Calu3 (cell line): ENCODE measurements at regions of chr3 and their contacts with region 1.

Region 1: DNA sequence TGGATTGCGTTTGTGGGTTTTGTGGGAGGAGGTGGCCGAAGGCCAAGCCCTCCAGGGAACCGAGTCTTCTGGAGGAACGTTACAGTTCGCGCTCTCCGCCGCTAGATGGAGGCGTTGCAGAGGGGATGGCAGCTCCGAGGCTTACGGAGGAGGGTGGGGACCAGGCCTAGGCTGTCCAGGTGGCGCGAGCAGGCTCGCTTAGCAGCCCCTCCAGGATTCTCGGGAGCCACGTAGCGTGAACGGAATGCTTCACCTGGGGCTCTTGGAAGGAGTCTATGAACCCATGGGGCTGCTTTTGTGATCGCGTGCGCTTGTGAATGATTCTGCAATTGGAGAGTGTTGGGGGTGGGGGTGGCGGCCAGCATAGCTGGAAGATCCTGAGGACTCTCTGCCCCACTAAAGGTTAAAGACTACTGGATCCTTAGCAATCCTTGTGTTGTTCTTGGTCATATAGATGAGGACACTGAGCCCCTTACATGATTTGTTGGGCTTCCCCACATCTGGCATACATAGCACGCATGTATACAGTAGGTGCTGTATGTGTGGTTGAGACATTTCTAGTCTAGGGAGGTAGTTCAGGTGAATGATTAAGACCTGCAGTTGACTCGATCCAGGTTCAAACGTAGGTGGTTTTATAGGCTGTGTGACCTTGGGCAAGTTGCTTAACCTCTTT is 25.7 kb downstream of the FAM3D start:
- DNase-seq: peak; percentile 84
- H3K4me3 Mint-ChIP-seq: no peak overlapping the region
- H3K27ac Mint-ChIP-seq: no peak overlapping the region
- H3K4me1 Mint-ChIP-seq: peaks cover 7% of the 10 kb centered on the region
- H3K27me3 Mint-ChIP-seq: peaks cover 7% of the 10 kb centered on the region
- CTCF ChIP-seq: peak; percentile 76

Region 2: GRCh38 chr3:58824285-58824684 is 183.4 kb after region 1 on chr3:
- CTCF ChIA-PET with region 1: no interaction called
- intact Hi-C with region 1: loop called (anchors 5 kb)
- DNase-seq: peak; percentile 70
- H3K4me3 Mint-ChIP-seq: no peak overlapping the region
- H3K27ac Mint-ChIP-seq: no peak overlapping the region
- H3K4me1 Mint-ChIP-seq: peaks cover 11% of the 10 kb centered on the region
- H3K27me3 Mint-ChIP-seq: no peaks in the 10 kb centered on the region
- CTCF ChIP-seq: peak; percentile 46